Esophagus squamous epithelium (tissue), 5 donors: ENCODE measurements at regions of chr17 and their contacts with region 1.

Region 1: DNA sequence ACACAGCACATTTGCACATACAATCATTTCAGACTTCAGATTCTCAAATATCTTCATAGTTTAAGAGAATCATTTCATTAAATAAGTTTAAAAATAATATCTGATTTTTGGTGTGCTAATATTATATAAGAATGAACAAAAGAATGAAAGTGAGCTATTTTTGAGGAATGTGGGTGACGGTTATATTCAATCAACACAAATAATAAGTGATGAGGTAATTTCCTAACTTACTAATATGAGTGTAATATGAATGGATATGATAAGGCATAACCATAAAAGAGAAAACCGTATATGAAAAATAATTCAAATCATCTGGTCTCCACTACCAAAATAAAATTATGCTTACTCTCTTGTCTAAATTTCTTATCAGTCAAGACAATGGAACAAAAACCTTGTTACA is 68.4 kb upstream of the NACA2 start:
- DNase-seq: no peak
- H3K4me3 ChIP-seq: no peak overlapping the region
- H3K27ac ChIP-seq: no peak overlapping the region
- H3K4me1 ChIP-seq: no peaks in the 10 kb centered on the region
- H3K27me3 ChIP-seq: no peaks in the 10 kb centered on the region
- CTCF ChIP-seq: no peak
- POLR2A ChIP-seq: no peak

Region 2: GRCh38 chr17:61361084-61361483 is 298.4 kb before region 1 on chr17:
- intact Hi-C with region 1: no loop called
- DNase-seq: no peak
- H3K4me3 ChIP-seq: no peak overlapping the region
- H3K27ac ChIP-seq: no peak overlapping the region
- H3K4me1 ChIP-seq: peaks cover 0 to 42% (median 19%) of the 10 kb centered on the region in 3 donors
- H3K27me3 ChIP-seq: no peaks in the 10 kb centered on the region
- CTCF ChIP-seq: no peak
- POLR2A ChIP-seq: no peak

Region 3: GRCh38 chr17:61619493-61619892 is 39.9 kb before region 1 on chr17:
- intact Hi-C with region 1: no loop called
- DNase-seq: no peak
- H3K4me3 ChIP-seq: no peak overlapping the region
- H3K27ac ChIP-seq: no peak overlapping the region
- H3K4me1 ChIP-seq: no peaks in the 10 kb centered on the region
- H3K27me3 ChIP-seq: no peaks in the 10 kb centered on the region
- CTCF ChIP-seq: no peak
- POLR2A ChIP-seq: no peak

Region 4: GRCh38 chr17:61822326-61823285 is 163.2 kb after region 1 on chr17:
- intact Hi-C with region 1: loop called (anchors 10 kb)
- DNase-seq: no peak
- H3K4me3 ChIP-seq: no peak overlapping the region
- H3K27ac ChIP-seq: no peak overlapping the region
- H3K4me1 ChIP-seq: no peaks in the 10 kb centered on the region
- H3K27me3 ChIP-seq: no peaks in the 10 kb centered on the region
- CTCF ChIP-seq: no peak
- POLR2A ChIP-seq: no peak